Activated CD8-positive, alpha-beta T cell treated with anti-CD3 and anti-CD28 coated beads for 36 hours (primary cell): ENCODE measurements at regions of chr17 and their contacts with region 1.

Region 1: GRCh38 chr17:35127751-35128514 is 6.5 kb downstream of the FNDC8 start:
- DNase-seq: no peak
- ATAC-seq: no peak
- H3K4me3 Mint-ChIP-seq: no peak overlapping the region
- H3K27ac Mint-ChIP-seq: no peak overlapping the region
- H3K4me1 Mint-ChIP-seq: peaks cover 3% of the 10 kb centered on the region
- H3K27me3 Mint-ChIP-seq: no peaks in the 10 kb centered on the region
- CTCF ChIP-seq: no peak

Region 2: GRCh38 chr17:34683390-34683789 is 444.5 kb before region 1 on chr17:
- CTCF ChIA-PET with region 1: no interaction called
- POLR2A ChIA-PET with region 1: no interaction called
- intact Hi-C with region 1: no loop called
- DNase-seq: no peak
- ATAC-seq: no peak
- H3K4me3 Mint-ChIP-seq: no peak overlapping the region
- H3K27ac Mint-ChIP-seq: no peak overlapping the region
- H3K4me1 Mint-ChIP-seq: no peaks in the 10 kb centered on the region
- H3K27me3 Mint-ChIP-seq: peaks cover 32% of the 10 kb centered on the region
- CTCF ChIP-seq: no peak

Region 3: GRCh38 chr17:35141681-35142466 is 13.9 kb after region 1 on chr17 and contains the start of gene NLE1:
- CTCF ChIA-PET with region 1: interaction called, 3 read pairs
- POLR2A ChIA-PET with region 1: interaction called, 26 read pairs
- intact Hi-C with region 1: no loop called
- DNase-seq: peak; percentile 90
- ATAC-seq: peak; percentile 95
- H3K4me3 Mint-ChIP-seq: peak within 1 kb of the TSS; percentile 83
- H3K27ac Mint-ChIP-seq: peak within 1 kb of the TSS; percentile 87
- H3K4me1 Mint-ChIP-seq: peaks cover 14% of the 10 kb centered on the region
- H3K27me3 Mint-ChIP-seq: no peaks in the 10 kb centered on the region
- CTCF ChIP-seq: peak; percentile 88
- total RNA-seq, gene NLE1: 49.1 to 49.8 TPM